Heart right ventricle (tissue), 16 donors: ENCODE measurements at regions of chr9 and their contacts with region 1.

Region 1: DNA sequence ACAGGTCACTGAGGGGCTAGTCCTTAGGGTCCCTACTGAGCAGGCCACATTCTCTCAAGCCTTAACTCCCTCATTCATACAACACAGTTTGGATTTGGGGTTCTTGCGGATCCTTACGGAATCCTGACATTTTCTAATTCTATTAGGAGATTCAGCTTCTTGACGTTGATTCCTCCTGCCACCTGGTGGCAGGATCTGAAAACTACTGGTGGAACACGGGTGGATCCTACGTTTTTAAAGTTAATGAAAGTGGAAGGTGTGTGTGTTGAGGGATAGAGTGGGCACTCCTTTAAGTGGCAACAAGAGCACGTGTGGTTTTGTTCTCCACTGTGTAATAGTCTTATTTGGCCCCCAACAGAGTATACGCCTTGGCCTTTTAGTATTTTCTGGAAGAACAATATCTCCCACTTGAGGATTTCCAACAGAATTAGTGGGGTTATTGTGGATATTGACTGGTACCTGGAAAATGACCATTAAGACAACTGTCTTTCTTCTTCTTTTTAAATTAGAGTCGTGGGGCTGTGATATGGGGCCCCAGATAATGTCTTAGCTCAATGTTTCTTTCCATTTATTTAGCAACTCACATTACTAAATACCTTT is 25.2 kb downstream of the SLC28A3 start:
- DNase-seq: peak; percentile 14 to 40
- ATAC-seq: peak in 3 of 8 donors; percentile 50 to 57 (median 55)
- H3K4me3 ChIP-seq: no peak overlapping the region
- H3K27ac ChIP-seq: no peak overlapping the region
- H3K4me1 ChIP-seq: peaks cover 0 to 17% (median 0%) of the 10 kb centered on the region in 9 donors
- H3K27me3 ChIP-seq: no peaks in the 10 kb centered on the region
- CTCF ChIP-seq: peak; percentile 62 to 87 (median 81)

Region 2: DNA sequence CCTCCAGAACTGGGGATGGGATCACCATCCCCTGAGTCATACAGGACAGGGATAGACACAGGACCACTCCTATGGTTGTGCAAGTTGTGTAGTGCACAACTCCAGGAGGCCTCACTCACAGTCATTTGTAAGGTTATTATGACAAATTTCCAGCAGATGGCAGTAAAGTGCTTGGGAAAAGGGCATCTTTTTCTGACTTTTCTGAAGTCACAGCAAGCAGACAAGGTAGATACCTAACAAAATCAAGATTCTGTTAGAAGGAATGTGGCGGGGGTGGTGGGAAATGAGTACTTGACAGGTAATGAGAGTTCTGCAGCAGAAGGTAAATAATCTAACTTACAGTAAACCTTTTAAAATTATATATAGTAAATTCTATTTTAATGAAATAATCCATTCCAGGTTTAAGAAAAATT is 377.5 kb before region 1 on chr9:
- intact Hi-C with region 1: loop called in 8 of 10 experiments (anchors 1 to 5 kb)
- DNase-seq: peak in 1 of 2 donors; percentile 13
- ATAC-seq: peak in 6 of 8 donors; percentile 42 to 64 (median 55)
- H3K4me3 ChIP-seq: no peak overlapping the region
- H3K27ac ChIP-seq: no peak overlapping the region
- H3K4me1 ChIP-seq: peaks cover 0 to 35% (median 8%) of the 10 kb centered on the region in 9 donors
- H3K27me3 ChIP-seq: no peaks in the 10 kb centered on the region
- CTCF ChIP-seq: peak; percentile 57 to 82 (median 71)

Region 3: GRCh38 chr9:84379740-84380139 is 64.4 kb after region 1 on chr9:
- intact Hi-C with region 1: no loop called
- DNase-seq: no peak
- ATAC-seq: no peak
- H3K4me3 ChIP-seq: no peak overlapping the region
- H3K27ac ChIP-seq: no peak overlapping the region
- H3K4me1 ChIP-seq: peaks cover 0 to 27% (median 8%) of the 10 kb centered on the region in 9 donors
- H3K27me3 ChIP-seq: no peaks in the 10 kb centered on the region
- CTCF ChIP-seq: no peak